ENCODE measurements at regions of chr14 and their contacts with region 1.

Region 1: GRCh38 chr14:67674481-67675169 is at the start of gene VTI1B:
- DNase-seq: no peak
- H3K4me3 ChIP-seq: peak within 1 kb of the TSS; percentile 78
- CTCF ChIP-seq: no peak

Region 2: DNA sequence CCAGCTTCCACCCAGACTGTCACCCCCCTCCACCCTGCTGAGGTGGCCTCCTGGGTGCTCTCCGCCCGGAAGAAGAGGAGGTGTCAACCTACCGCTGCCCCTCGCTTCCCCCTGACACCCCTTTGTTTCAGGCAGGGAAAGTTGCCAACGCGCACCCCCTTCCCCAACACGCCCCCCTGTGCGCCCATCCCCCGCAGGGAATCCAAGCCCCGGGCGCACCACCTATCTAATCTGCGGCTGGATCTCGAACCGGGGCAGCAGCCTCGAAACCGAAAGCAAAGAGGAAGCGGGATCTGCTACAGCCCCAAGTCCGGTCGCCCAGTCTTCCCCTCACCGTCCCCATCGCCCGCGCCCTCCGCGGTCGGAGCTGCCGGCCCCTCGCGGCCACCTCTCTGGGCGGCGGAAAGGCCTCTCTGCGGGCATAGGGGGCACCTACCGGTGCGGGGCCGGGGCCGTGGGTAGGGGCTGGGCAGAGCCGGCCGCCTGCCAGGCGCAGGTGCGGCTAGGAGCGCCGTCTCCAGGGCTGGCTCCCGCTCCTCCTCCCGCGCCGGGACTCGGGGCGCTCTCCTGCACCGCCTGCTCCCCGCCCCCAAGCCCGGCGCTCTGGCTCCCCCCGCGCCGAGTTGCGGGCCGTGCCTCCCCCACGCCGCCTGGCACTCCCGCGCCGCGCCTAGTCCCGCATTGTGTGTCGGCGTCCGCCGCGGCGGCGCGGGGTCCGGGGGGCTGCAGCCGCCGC is 159.8 kb before region 1 on chr14:
- CTCF ChIA-PET with region 1: no interaction called
- POLR2A ChIA-PET with region 1: no interaction called
- DNase-seq: no peak
- H3K4me3 ChIP-seq: peak overlapping the region; percentile 67
- CTCF ChIP-seq: no peak

Region 3: DNA sequence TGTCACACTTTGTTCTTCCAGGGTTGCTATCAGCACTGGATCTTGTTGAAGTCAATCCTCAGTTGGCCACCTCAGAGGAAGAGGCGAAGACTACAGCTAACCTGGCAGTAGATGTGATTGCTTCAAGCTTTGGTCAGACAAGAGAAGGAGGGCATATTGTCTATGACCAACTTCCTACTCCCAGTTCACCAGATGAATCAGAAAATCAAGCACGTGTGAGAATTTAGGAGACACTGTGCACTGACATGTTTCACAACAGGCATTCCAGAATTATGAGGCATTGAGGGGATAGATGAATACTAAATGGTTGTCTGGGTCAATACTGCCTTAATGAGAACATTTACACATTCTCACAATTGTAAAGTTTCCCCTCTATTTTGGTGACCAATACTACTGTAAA is 23.9 kb before region 1 on chr14:
- CTCF ChIA-PET with region 1: interaction called, 109 read pairs
- POLR2A ChIA-PET with region 1: no interaction called
- DNase-seq: no peak
- H3K4me3 ChIP-seq: no peak overlapping the region
- CTCF ChIP-seq: no peak

Measured in AG04449 (cell line).